HEK293T (cell line): ENCODE measurements at regions of chr6 and their contacts with region 1.

Region 1: GRCh38 chr6:82902290-82902689 is 163.4 kb downstream of the UBE3D start:
- DNase-seq: no peak

Region 2: GRCh38 chr6:82980086-82980485 is 77.8 kb after region 1 on chr6:
- CTCF ChIA-PET with region 1: interaction called, 11 read pairs
- POLR2A ChIA-PET with region 1: no interaction called
- DNase-seq: no peak